ENCODE measurements at regions of chr4 and their contacts with region 1.

Region 1: DNA sequence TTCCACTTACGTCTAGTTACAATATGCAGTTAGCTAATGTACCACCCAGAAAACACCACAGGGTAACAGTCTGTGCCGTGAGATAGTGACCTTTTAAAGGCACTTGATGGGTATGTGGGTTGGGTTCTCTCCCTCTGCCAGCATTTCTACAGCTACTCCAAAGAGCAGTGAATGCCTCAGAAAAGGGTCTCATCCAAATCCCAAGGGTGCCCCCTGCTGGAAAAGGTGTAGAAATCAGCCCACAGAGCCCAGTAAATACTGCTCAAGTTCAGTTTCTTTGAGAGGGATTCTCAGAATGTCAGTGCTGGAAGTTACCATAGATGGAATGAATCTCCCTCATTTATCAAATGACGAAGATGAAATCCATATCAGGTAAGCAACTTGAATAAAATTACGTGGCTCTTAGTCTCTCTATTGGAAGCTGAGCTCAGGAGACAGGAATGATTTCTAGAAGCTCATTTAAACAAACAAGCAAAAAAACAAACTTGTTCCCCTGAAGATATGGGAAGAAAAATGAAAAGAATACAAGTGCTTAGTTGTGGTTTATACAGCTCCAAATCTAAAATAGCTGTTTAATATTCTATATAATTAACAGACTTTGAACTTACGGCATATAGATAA is 9.5 kb downstream of the RNF175 start:
- DNase-seq: peak; percentile 31
- ATAC-seq: peak; percentile 94
- H3K4me3 ChIP-seq: no peak overlapping the region
- H3K27ac ChIP-seq: no peak overlapping the region
- H3K4me1 ChIP-seq: no peaks in the 10 kb centered on the region
- H3K27me3 ChIP-seq: no peaks in the 10 kb centered on the region
- CTCF ChIP-seq: peak; percentile 69 to 81 (median 72)
- EP300 ChIP-seq: no peak
- POLR2A ChIP-seq: no peak
- RAD21 ChIP-seq: peak; percentile 84

Region 2: DNA sequence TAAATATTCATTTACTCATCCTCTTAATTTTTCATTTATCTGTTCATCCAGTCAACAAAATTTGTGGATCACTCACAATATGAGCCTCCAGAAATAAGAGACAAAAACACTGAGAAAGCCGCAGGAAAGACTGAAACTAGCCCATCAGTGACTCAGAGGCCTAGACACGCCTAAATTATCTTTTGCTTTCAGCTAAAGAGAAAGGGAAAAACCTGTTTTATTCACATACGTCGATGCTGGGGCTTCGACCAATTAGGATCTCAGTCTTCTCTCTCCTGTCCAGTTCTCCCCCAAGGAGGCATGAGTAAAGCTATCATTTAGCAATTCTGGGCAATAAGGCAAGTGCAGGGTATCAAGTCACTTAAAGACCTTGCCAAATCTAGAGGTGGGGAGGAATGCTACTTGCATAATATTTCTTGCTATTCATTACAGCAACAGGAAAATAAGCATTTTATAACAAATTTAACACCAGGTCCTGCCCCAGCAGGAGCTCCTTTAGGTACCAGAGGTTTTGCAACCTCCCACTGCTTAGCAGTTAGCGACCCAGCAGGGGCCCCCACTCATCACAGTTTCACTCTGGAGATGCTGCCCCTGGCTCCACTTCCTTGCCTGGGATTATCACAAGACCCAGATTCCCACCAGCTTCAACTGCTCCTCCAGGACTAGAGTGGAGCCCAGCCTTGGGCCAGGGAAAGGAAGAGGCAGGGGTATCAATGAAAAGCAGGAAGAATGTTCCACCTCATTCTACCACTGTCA is 1040.4 kb before region 1 on chr4:
- CTCF ChIA-PET with region 1: no interaction called
- POLR2A ChIA-PET with region 1: no interaction called
- RAD21 ChIA-PET with region 1: no interaction called
- SMC1A ChIA-PET with region 1: no interaction called
- in situ Hi-C with region 1: no loop called
- intact Hi-C with region 1: no loop called
- DNase-seq: peak; percentile 42
- ATAC-seq: peak; percentile 95
- H3K4me3 ChIP-seq: no peak overlapping the region
- H3K27ac ChIP-seq: peak overlapping the region; percentile 45
- H3K4me1 ChIP-seq: peaks cover 11% of the 10 kb centered on the region
- H3K27me3 ChIP-seq: no peaks in the 10 kb centered on the region
- CTCF ChIP-seq: no peak
- EP300 ChIP-seq: no peak; a peak in 1 of 4 replicates
- POLR2A ChIP-seq: no peak
- RAD21 ChIP-seq: no peak

Region 3: DNA sequence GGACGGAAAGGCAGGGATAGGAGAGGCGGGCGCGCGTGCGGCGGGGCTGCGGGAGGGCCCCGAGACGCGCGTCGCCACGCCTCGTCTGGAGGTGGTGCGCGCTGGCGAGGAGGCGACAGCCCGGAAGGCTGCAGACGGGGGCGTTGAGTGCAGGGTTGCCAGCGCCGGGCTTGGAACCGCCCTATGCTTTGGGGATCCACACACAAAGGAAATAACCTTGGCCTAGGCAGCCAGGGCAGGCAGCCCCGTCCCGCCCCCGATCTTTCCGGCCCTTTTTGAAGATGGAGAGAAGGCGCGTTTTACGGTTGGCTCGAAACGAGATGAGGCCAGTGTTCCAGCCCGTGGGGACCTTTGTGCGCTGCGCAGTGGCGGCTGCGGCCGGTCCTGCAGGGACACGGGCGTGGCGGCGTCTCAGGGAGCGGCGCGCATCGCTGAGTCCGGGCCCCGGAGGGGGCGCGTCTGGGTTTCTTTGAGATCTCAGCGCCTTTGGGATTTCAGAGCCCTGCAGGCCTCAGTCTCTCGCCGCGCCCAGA is 596.9 kb before region 1 on chr4:
- CTCF ChIA-PET with region 1: interaction called, 4 read pairs
- POLR2A ChIA-PET with region 1: no interaction called
- RAD21 ChIA-PET with region 1: no interaction called
- SMC1A ChIA-PET with region 1: no interaction called
- in situ Hi-C with region 1: no loop called
- intact Hi-C with region 1: loop called (anchors 5 kb)
- DNase-seq: no peak
- ATAC-seq: peak; percentile 82
- H3K4me3 ChIP-seq: peak overlapping the region; percentile 62
- H3K27ac ChIP-seq: no peak overlapping the region
- H3K4me1 ChIP-seq: peaks cover 33% of the 10 kb centered on the region
- H3K27me3 ChIP-seq: peaks cover 0 to 5% of the 10 kb centered on the region in 2 experiments; a peak in 3 of 4 replicates
- CTCF ChIP-seq: no peak
- EP300 ChIP-seq: no peak
- POLR2A ChIP-seq: peak; percentile 29; the same call in 1 of the 2 replicates
- RAD21 ChIP-seq: no peak

Region 4: DNA sequence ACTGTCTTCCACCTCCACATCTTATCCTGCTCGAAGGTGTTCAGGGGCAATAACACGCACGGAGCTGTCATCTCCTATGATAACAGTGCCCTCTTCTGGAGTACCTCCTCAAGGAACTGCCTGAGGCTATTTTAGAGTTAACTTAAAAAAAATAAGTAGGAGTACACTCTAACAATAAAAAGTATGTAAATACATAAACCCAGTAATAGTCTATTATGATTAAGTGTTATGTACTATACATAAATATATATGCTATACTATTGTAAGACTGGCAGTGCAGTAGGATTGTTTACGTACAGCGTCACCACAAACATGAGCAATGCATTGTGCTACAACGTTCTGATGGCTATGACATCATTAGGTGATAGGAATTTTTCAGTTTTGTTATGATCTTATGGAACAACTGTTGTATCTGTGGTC is 100.7 kb before region 1 on chr4:
- CTCF ChIA-PET with region 1: interaction called, 31 read pairs
- POLR2A ChIA-PET with region 1: no interaction called
- RAD21 ChIA-PET with region 1: interaction called, 20 read pairs
- SMC1A ChIA-PET with region 1: interaction called, 18 read pairs
- in situ Hi-C with region 1: no loop called
- intact Hi-C with region 1: loop called (anchors 1 kb)
- DNase-seq: no peak
- ATAC-seq: peak; percentile 75
- H3K4me3 ChIP-seq: no peak overlapping the region
- H3K27ac ChIP-seq: no peak overlapping the region
- H3K4me1 ChIP-seq: no peaks in the 10 kb centered on the region
- H3K27me3 ChIP-seq: no peaks in the 10 kb centered on the region
- CTCF ChIP-seq: peak; percentile 39 to 50 (median 48); a peak in 5 of 6 replicates
- EP300 ChIP-seq: no peak
- POLR2A ChIP-seq: no peak
- RAD21 ChIP-seq: peak; percentile 62

Region 5: GRCh38 chr4:153731239-153731638 is 19.1 kb before region 1 on chr4:
- CTCF ChIA-PET with region 1: interaction called, 20 read pairs
- POLR2A ChIA-PET with region 1: no interaction called
- RAD21 ChIA-PET with region 1: no interaction called
- SMC1A ChIA-PET with region 1: interaction called, 5 read pairs
- in situ Hi-C with region 1: no loop called
- intact Hi-C with region 1: no loop called
- DNase-seq: no peak
- ATAC-seq: no peak
- H3K4me3 ChIP-seq: no peak overlapping the region
- H3K27ac ChIP-seq: no peak overlapping the region
- H3K4me1 ChIP-seq: peaks cover 12% of the 10 kb centered on the region; the same call in 1 of the 2 replicates
- H3K27me3 ChIP-seq: 0 out of 4 replicates have a peak, but pooled peaks cover 0 to 4% of the 10 kb centered on the region in 2 experiments
- CTCF ChIP-seq: no peak
- EP300 ChIP-seq: no peak
- POLR2A ChIP-seq: no peak
- RAD21 ChIP-seq: no peak

Region 6: DNA sequence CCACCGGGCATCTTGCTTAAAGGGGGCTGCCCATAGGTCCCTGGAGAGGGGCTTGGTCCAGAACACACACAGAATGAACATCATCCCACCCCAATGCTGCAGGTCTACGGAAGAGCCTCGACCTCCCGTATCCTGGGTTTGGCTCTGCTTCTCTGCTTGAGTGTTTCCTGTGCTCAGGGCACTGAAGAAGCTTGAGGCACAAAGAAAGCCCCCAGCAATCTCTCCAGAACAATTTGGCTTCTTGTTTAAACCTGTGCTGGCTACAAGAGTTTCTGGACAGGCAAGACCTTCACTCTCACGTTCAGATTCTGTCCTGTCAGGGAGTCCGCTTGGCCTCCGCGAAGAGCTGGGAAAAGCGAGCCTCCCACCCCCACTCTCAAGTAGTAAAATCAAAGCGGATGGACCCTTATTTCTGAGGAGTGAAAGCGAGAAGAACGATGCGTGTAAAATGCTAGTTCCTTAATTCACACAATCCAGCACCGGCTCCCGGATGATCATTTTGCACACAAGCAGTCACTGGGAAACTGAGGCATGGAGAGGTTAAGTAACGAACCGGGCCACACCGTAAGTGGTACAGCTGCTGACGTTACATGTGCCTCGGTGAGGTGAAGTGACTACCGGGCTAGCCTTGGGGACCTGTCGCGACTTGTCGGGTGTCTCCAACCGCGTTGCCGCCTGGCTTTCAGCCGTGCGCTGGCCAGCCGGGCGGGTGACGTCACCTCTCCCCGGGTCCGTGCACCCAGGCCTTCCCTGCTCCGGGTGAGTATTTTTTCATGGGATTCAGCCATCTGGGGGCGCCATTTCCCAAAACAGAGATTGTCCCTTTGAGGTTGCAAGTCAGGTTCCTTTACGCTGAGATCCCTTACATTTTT is 41.7 kb after region 1 on chr4:
- CTCF ChIA-PET with region 1: no interaction called
- POLR2A ChIA-PET with region 1: no interaction called
- RAD21 ChIA-PET with region 1: no interaction called
- SMC1A ChIA-PET with region 1: no interaction called
- in situ Hi-C with region 1: no loop called
- intact Hi-C with region 1: no loop called
- DNase-seq: no peak
- ATAC-seq: no peak
- H3K4me3 ChIP-seq: no peak overlapping the region
- H3K27ac ChIP-seq: no peak overlapping the region
- H3K4me1 ChIP-seq: no peaks in the 10 kb centered on the region
- H3K27me3 ChIP-seq: peaks cover 29 to 31% of the 10 kb centered on the region in 2 experiments
- CTCF ChIP-seq: 0 out of 6 replicates have a peak, but pooled peaks of 2 of the 3 experiments have one; percentile 1 to 11
- EP300 ChIP-seq: no peak
- POLR2A ChIP-seq: no peak
- RAD21 ChIP-seq: no peak

Region 7: DNA sequence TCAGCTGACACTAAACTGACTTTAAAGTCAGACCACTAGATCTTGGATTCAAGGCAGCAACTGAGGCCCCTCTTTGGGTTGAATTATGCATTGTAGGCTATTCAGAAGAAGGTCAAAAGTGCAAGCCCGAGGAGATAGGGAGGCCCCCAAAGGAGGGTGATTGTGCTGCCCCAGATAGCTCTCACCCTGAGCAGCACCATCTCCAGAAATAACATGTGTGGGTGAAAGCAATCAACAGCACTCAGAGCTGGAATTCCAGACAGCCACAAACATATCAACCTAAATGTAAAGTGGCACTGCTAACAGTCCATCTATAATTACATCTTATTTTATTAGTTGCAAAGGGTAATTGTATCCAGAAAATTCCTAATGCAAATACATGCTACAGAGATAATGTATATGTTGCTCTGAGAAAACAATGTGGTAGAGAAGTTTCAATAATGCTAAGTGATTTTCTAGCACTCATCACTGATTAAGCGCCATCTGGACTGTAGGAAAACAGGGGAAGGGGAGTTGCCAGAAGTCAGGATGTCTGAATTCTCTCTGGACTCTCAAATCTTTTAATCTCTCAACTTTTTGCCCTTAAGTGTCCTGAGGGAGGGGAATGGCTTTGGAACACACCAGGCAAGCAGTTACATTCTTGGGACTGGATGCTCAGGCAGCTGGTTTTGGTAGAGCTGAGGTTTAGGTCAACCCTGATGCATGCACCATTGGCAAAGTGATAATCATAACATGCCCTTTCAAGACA is 100.4 kb after region 1 on chr4:
- CTCF ChIA-PET with region 1: no interaction called
- POLR2A ChIA-PET with region 1: no interaction called
- RAD21 ChIA-PET with region 1: no interaction called
- SMC1A ChIA-PET with region 1: no interaction called
- in situ Hi-C with region 1: no loop called
- intact Hi-C with region 1: no loop called
- DNase-seq: no peak
- ATAC-seq: no peak
- H3K4me3 ChIP-seq: no peak overlapping the region
- H3K27ac ChIP-seq: no peak overlapping the region
- H3K4me1 ChIP-seq: no peaks in the 10 kb centered on the region
- H3K27me3 ChIP-seq: no peaks in the 10 kb centered on the region; a peak in 1 of 4 replicates
- CTCF ChIP-seq: no peak
- EP300 ChIP-seq: no peak
- POLR2A ChIP-seq: no peak
- RAD21 ChIP-seq: no peak

Region 8: GRCh38 chr4:153901220-153901619 is 150.9 kb after region 1 on chr4:
- CTCF ChIA-PET with region 1: no interaction called
- POLR2A ChIA-PET with region 1: no interaction called
- RAD21 ChIA-PET with region 1: no interaction called
- SMC1A ChIA-PET with region 1: no interaction called
- in situ Hi-C with region 1: no loop called
- intact Hi-C with region 1: no loop called
- DNase-seq: no peak
- ATAC-seq: no peak
- H3K4me3 ChIP-seq: no peak overlapping the region
- H3K27ac ChIP-seq: no peak overlapping the region
- H3K4me1 ChIP-seq: no peaks in the 10 kb centered on the region
- H3K27me3 ChIP-seq: no peaks in the 10 kb centered on the region; a peak in 1 of 4 replicates
- CTCF ChIP-seq: no peak
- EP300 ChIP-seq: no peak
- POLR2A ChIP-seq: no peak
- RAD21 ChIP-seq: no peak